Naive thymus-derived CD8-positive, alpha-beta T cell (primary cell): ENCODE measurements at regions of chr17 and their contacts with region 1.

Region 1: DNA sequence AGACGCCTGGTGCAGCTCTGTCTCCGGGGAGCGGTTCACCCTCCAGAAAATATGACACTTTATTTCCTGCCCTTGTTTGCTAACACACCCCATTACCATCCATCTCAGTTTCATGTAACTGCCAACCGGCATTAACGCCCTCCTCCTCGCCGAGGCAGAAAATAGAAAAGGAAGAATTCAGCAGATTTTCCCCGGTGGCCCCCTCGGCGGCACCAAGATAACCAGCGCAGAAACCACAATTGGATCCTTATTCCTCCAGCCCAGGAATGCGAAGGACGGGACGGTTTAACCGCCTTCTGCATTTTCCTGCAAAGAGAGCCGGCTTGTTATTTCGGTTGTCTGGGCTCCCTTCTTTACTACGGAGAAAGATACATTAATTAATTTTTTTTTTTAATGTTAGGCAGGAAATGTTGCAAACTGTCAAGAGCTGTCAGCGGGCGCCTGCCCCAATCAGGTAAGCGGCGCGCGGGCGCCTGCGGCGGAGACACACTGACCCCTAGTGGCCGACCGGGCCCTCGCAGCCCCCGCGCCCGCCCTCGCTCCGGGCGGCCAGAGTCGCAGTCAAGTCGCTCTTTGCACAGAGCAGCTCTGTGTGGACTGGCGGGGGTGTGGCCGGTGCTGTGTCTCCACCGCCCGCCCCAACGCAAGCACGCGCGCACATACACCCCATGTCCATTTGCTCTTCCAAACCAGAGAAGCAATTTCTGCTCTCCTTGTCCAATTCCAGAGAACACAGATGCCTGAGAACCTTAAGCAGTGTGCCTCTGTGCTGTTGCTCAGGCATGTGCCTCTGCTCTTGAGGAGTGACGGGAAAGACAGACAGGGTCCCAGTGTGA is 53.6 kb downstream of the C17orf67 start:
- DNase-seq: peak; percentile 72 to 89 (median 88)
- ATAC-seq: peak; percentile 96 to 97
- H3K4me3 Mint-ChIP-seq: peak overlapping the region; percentile 89 to 98 (median 95)
- H3K27ac Mint-ChIP-seq: peak overlapping the region; percentile 91 to 99 (median 98)
- H3K4me1 Mint-ChIP-seq: peaks cover 17 to 24% (median 21%) of the 10 kb centered on the region in 4 donors
- H3K27me3 Mint-ChIP-seq: peaks cover 0 to 5% (median 0%) of the 10 kb centered on the region in 5 donors

Region 2: GRCh38 chr17:56653877-56654276 is 126.2 kb before region 1 on chr17:
- POLR2A ChIA-PET with region 1: interaction called, 10 read pairs
- DNase-seq: peak; percentile 21 to 89 (median 71)
- ATAC-seq: peak; percentile 100
- H3K4me3 Mint-ChIP-seq: no peak overlapping the region
- H3K27ac Mint-ChIP-seq: peak overlapping the region in 8 of 10 donors; percentile 45 to 91 (median 75)
- H3K4me1 Mint-ChIP-seq: peaks cover 5 to 7% (median 6%) of the 10 kb centered on the region in 4 donors
- H3K27me3 Mint-ChIP-seq: peaks cover 0 to 3% (median 0%) of the 10 kb centered on the region in 5 donors

Region 3: DNA sequence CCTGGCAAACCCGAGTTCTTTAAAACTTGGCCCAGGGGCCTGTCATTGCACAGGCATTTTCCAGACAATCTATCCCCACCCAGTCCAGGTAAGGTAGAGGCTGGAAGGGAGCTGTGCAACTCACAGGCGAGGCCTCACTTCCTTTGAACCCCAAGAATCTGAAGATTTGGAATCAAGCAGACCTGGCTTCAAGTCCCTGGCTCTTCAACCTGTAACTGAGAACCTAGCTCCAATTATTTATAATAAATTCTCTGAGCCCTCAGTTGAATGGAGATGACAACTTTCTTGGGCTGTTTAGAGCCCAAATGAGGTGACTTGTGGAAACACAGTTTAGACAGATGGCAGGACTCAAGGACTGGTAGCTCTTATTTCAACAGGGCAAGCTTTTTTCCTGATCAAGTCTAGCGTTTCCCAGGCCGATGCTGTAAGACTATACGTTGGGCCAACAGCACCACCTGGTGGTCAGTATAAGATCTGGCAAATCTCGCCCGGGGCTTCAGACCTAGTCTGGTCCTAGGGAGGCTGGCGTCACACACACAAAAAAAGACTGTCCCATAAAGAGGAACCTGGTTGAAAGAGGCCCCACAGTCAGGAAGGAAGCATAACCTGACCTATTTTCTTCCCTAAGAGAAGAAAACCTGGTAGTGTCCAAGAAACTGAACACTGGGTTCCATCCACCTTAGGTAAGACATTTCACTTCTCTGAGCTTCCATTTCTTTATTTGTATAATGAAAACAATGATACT is 64.3 kb before region 1 on chr17:
- POLR2A ChIA-PET with region 1: interaction called, 12 read pairs
- DNase-seq: peak; percentile 58 to 89 (median 72)
- ATAC-seq: peak; percentile 88 to 98
- H3K4me3 Mint-ChIP-seq: no peak overlapping the region
- H3K27ac Mint-ChIP-seq: peak overlapping the region in 1 of 10 donors; percentile 30
- H3K4me1 Mint-ChIP-seq: peaks cover 0 to 2% (median 0%) of the 10 kb centered on the region in 4 donors
- H3K27me3 Mint-ChIP-seq: peaks cover 0 to 3% (median 2%) of the 10 kb centered on the region in 5 donors